ENCODE measurements at regions of chr12 and their contacts with region 1.

Region 1: DNA sequence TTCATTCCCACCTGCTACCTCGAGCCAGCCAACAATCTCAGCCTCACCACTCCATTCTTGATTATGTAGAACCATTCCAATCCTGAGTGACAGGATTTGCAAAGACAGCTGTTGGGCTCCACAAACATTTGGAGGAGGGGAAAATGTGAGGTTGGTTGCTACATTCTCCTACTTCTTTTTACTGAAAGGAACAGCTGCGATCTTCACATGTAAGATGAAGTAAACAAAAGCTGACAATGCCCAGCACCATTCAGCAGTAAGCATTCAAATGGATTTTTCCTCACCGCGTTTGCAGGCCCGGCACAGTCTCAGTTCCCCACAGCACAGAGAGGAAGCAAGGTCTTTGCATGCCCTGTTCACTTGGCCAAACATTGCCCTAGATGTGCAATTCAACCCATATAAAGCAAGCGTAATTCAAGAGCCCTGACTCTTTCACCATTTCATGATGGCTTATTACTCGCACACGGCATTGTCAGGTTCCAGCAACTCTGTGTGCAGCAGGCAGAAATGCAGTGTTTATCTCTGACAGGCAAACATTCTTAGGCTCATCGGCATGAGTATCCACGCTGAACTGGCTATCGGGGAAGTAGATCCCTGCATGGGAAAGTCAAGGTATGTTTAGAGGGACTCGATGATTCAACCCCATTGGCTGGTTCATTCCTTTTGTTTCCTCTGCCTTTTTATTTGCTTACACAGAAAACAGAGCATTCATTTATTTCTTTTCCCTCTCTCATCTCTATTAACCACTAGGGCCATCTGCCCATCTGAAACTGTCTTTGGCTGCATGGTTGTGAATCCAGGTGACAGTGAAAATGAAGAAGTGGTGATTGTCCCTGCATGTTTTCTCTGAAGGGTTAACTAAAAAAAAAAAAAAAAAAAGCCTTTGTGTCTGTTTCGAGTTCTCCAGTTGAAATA is 236.1 kb upstream of the PLEKHG7 start:
- DNase-seq: peak in 1 of 3 donors; percentile 53
- ATAC-seq: peak; percentile 18 to 24
- H3K4me3 ChIP-seq: peak overlapping the region; percentile 13
- H3K27ac ChIP-seq: peak overlapping the region; percentile 92
- H3K4me1 ChIP-seq: peaks cover 7% of the 10 kb centered on the region
- H3K27me3 ChIP-seq: no peaks in the 10 kb centered on the region

Region 2: GRCh38 chr12:92414170-92415070 is 52.2 kb before region 1 on chr12:
- intact Hi-C with region 1: loop called in 1 of 4 experiments (anchors 10 kb)
- DNase-seq: no peak
- ATAC-seq: no peak
- H3K4me3 ChIP-seq: no peak overlapping the region
- H3K27ac ChIP-seq: no peak overlapping the region
- H3K4me1 ChIP-seq: peaks cover 5% of the 10 kb centered on the region
- H3K27me3 ChIP-seq: no peaks in the 10 kb centered on the region

Region 3: GRCh38 chr12:92445253-92446082 is 21.2 kb before region 1 on chr12:
- intact Hi-C with region 1: loop called in 1 of 4 experiments (anchors 2 kb)
- DNase-seq: peak in 1 of 3 donors; percentile 39
- ATAC-seq: peak; percentile 56 to 57
- H3K4me3 ChIP-seq: no peak overlapping the region
- H3K27ac ChIP-seq: peak overlapping the region; percentile 72
- H3K4me1 ChIP-seq: peaks cover 3% of the 10 kb centered on the region
- H3K27me3 ChIP-seq: no peaks in the 10 kb centered on the region

Measured in right cardiac atrium (tissue), 5 donors.